ENCODE measurements at regions of chr10 and their contacts with region 1.

Region 1: GRCh38 chr10:71850637-71851464 is at the start of gene PSAP:
- DNase-seq: peak; percentile 96
- ATAC-seq: peak; percentile 97
- H3K4me3 ChIP-seq: peak within 1 kb of the TSS; percentile 72 to 95 (median 91)
- H3K4me3 Mint-ChIP-seq: peak within 1 kb of the TSS; percentile 99
- H3K27ac ChIP-seq: peak within 1 kb of the TSS; percentile 65 to 91
- H3K27ac Mint-ChIP-seq: peak within 1 kb of the TSS; percentile 94
- H3K4me1 ChIP-seq: peaks cover 35 to 51% of the 10 kb centered on the region in 2 donors
- H3K4me1 Mint-ChIP-seq: peaks cover 57% of the 10 kb centered on the region
- H3K27me3 ChIP-seq: no peaks in the 10 kb centered on the region
- H3K27me3 Mint-ChIP-seq: no peaks in the 10 kb centered on the region
- CTCF ChIP-seq: no peak
- total RNA-seq, gene PSAP: 509 and 536 TPM in 2 replicates

Region 2: GRCh38 chr10:71817831-71818655 is 32.8 kb before region 1 on chr10:
- CTCF ChIA-PET with region 1: no interaction called
- POLR2A ChIA-PET with region 1: no interaction called
- intact Hi-C with region 1: no loop called
- DNase-seq: no peak
- ATAC-seq: no peak
- H3K4me3 ChIP-seq: no peak overlapping the region
- H3K4me3 Mint-ChIP-seq: no peak overlapping the region
- H3K27ac ChIP-seq: no peak overlapping the region
- H3K27ac Mint-ChIP-seq: no peak overlapping the region
- H3K4me1 ChIP-seq: no peaks in the 10 kb centered on the region
- H3K4me1 Mint-ChIP-seq: peaks cover 1% of the 10 kb centered on the region
- H3K27me3 ChIP-seq: no peaks in the 10 kb centered on the region
- H3K27me3 Mint-ChIP-seq: no peaks in the 10 kb centered on the region
- CTCF ChIP-seq: no peak

Region 3: GRCh38 chr10:71873582-71874211 is 22.8 kb after region 1 on chr10:
- CTCF ChIA-PET with region 1: interaction called, 8 read pairs
- POLR2A ChIA-PET with region 1: interaction called, 7 read pairs
- intact Hi-C with region 1: loop called (anchors 1 kb)
- DNase-seq: peak; percentile 41
- ATAC-seq: peak; percentile 58
- H3K4me3 ChIP-seq: no peak overlapping the region
- H3K4me3 Mint-ChIP-seq: peak overlapping the region; percentile 11
- H3K27ac ChIP-seq: peak overlapping the region; percentile 26 to 63
- H3K27ac Mint-ChIP-seq: peak overlapping the region; percentile 70
- H3K4me1 ChIP-seq: peaks cover 24 to 47% of the 10 kb centered on the region in 2 donors
- H3K4me1 Mint-ChIP-seq: peaks cover 40% of the 10 kb centered on the region
- H3K27me3 ChIP-seq: no peaks in the 10 kb centered on the region
- H3K27me3 Mint-ChIP-seq: no peaks in the 10 kb centered on the region
- CTCF ChIP-seq: no peak

Region 4: DNA sequence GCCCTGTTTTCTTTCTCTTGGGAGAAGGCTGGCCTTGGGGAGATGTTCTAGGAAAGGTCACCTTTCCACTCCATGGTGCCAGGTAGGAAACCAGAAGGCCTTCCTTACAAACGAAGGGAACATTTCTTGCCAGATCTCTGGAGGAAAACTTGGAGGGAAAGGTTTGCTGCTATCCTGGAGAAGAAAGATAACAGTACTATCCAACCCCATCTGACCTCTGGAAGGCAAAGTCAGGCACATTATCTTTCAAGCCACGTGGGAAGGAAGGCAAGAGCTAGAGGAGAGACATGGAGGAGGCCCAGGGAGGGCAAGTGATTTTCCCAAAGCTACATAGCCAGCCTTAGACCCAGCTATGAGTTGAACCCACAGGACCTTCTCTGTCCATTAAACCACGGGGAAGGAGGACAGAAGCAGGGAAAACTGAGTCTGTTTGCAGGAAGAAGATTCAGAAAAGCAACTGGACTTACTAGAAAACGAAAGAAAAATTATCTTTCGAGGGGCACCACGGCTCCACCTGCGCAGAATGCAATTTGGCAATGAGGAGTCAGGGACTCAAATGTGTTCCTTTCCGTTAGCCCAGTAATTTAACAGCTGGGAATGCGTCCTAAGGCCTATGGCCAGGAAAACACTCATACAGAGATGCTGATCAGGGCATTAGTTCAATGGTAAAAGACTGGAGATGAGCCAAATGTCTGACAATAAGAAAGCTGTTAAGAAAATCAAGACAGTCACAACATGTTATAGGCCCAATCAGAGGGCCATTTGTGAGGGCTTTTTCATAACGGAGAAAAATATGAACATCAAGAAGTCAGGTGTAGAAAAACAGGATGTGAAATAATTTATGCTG is 32.2 kb after region 1 on chr10:
- CTCF ChIA-PET with region 1: interaction called, 5 read pairs
- POLR2A ChIA-PET with region 1: interaction called, 12 read pairs
- intact Hi-C with region 1: loop called (anchors 1 kb)
- DNase-seq: peak; percentile 37
- ATAC-seq: no peak
- H3K4me3 ChIP-seq: peak overlapping the region in 1 of 5 experiments; percentile 8
- H3K4me3 Mint-ChIP-seq: peak overlapping the region; percentile 69
- H3K27ac ChIP-seq: no peak overlapping the region
- H3K27ac Mint-ChIP-seq: peak overlapping the region; percentile 85
- H3K4me1 ChIP-seq: peaks cover 29 to 42% of the 10 kb centered on the region in 2 donors
- H3K4me1 Mint-ChIP-seq: peaks cover 44% of the 10 kb centered on the region
- H3K27me3 ChIP-seq: no peaks in the 10 kb centered on the region
- H3K27me3 Mint-ChIP-seq: no peaks in the 10 kb centered on the region
- CTCF ChIP-seq: no peak

Region 5: DNA sequence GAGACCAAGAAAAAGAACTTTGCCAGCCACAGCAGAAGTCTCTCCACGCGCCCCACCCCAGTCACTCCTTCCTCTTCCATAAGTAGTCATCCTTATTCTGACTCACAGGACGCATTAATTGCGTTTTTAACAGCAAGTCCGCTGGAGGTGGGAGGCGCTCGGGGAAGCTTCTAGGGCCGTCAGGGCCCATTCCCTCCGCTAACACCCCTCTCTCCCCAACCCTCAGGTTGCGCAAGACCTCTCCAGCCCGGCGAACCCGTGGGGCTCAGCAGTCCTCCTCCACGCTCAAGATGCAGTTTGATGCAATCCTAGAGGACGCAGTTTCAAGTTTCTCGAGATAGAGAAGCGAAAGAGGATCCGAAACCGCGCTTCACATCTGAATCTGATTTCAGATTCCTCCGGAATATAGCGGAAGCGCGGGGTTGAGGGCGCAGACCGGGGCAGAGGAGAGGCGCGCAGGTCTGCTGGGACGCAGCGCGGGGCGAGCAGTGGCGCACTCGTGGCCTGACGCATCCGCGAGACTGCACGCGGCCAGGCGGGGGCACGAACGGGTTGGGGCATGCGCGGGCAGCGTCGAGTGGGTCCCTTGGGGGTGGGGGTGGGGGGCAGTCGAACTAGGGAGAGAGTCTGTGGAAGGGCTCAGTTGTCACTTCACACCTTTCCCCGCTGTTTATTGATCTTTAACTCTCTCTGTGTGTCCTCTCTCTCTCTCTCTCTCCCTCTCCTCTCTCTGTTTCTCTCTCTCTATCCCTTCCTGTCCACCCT is 38.0 kb after region 1 on chr10:
- CTCF ChIA-PET with region 1: interaction called, 5 read pairs
- POLR2A ChIA-PET with region 1: interaction called, 12 read pairs
- intact Hi-C with region 1: loop called (anchors 1 kb)
- DNase-seq: peak; percentile 96
- ATAC-seq: peak; percentile 95
- H3K4me3 ChIP-seq: peak overlapping the region; percentile 36 to 66 (median 54)
- H3K4me3 Mint-ChIP-seq: peak overlapping the region; percentile 87
- H3K27ac ChIP-seq: peak overlapping the region; percentile 71 to 77
- H3K27ac Mint-ChIP-seq: peak overlapping the region; percentile 92
- H3K4me1 ChIP-seq: peaks cover 33 to 40% of the 10 kb centered on the region in 2 donors
- H3K4me1 Mint-ChIP-seq: peaks cover 36% of the 10 kb centered on the region
- H3K27me3 ChIP-seq: no peaks in the 10 kb centered on the region
- H3K27me3 Mint-ChIP-seq: no peaks in the 10 kb centered on the region
- CTCF ChIP-seq: peak; percentile 16

Region 6: GRCh38 chr10:72552857-72553256 is 702.0 kb after region 1 on chr10:
- CTCF ChIA-PET with region 1: no interaction called
- POLR2A ChIA-PET with region 1: no interaction called
- intact Hi-C with region 1: no loop called
- DNase-seq: no peak
- ATAC-seq: no peak
- H3K4me3 ChIP-seq: no peak overlapping the region
- H3K4me3 Mint-ChIP-seq: no peak overlapping the region
- H3K27ac ChIP-seq: no peak overlapping the region
- H3K27ac Mint-ChIP-seq: no peak overlapping the region
- H3K4me1 ChIP-seq: no peaks in the 10 kb centered on the region
- H3K4me1 Mint-ChIP-seq: no peaks in the 10 kb centered on the region
- H3K27me3 ChIP-seq: no peaks in the 10 kb centered on the region
- H3K27me3 Mint-ChIP-seq: no peaks in the 10 kb centered on the region
- CTCF ChIP-seq: no peak

Region 7: DNA sequence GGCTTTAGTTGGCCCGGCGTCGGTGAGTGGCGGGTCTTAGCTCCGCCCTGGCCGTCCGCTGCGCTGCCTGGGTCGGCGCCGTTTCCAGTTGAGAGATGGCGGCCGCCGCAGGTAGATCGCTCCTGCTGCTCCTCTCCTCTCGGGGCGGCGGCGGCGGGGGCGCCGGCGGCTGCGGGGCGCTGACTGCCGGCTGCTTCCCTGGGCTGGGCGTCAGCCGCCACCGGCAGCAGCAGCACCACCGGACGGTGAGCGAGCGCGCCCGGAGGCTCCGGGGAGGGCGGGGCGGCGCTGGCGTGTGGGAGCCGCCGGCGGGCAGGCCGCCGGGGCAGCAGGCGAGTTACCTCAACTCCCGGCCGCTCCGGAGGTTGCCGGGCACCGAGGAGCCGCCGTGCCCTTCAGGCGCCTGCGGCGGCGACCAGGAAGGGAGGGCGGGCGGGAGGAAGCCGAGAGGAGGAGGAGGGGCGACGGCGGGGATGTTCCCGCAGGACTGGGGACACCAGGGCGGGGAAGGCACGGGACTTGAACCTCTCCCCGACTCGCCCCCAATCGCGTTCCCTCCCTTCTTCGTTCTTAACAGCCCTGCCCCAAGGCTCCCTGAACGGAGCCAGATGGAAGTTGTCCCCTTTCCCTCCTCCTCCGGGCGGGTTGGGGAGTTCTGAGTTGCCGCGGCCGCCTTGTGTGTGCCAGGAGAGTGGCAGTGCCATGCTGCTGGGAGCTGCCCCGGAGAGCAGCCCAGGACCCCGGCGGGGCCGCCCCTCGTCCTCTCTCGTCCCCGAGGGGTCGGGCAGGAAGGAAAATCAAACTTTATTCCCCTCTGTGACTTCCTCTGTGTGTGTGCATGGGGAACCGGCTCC is 841.4 kb after region 1 on chr10 and contains the start of gene MCU:
- CTCF ChIA-PET with region 1: no interaction called
- POLR2A ChIA-PET with region 1: no interaction called
- intact Hi-C with region 1: loop called (anchors 10 kb)
- DNase-seq: peak; percentile 94
- ATAC-seq: peak; percentile 95
- H3K4me3 ChIP-seq: peak within 1 kb of the TSS; percentile 64 to 91 (median 79)
- H3K4me3 Mint-ChIP-seq: peak within 1 kb of the TSS; percentile 95
- H3K27ac ChIP-seq: peak within 1 kb of the TSS; percentile 58 to 72
- H3K27ac Mint-ChIP-seq: peak within 1 kb of the TSS; percentile 91
- H3K4me1 ChIP-seq: peaks cover 28 to 33% of the 10 kb centered on the region in 2 donors
- H3K4me1 Mint-ChIP-seq: peaks cover 43% of the 10 kb centered on the region
- H3K27me3 ChIP-seq: no peaks in the 10 kb centered on the region
- H3K27me3 Mint-ChIP-seq: no peaks in the 10 kb centered on the region
- CTCF ChIP-seq: no peak
- total RNA-seq, gene MCU: 17.6 and 21.1 TPM in 2 replicates